HepG2 (cell line): ENCODE measurements at regions of chr2 and their contacts with region 1.

Region 1: GRCh38 chr2:177929662-177930522 is 142.7 kb downstream of the PDE11A start:
- DNase-seq: no peak
- ATAC-seq: no peak
- H3K4me3 ChIP-seq: no peak overlapping the region
- H3K27ac ChIP-seq: no peak overlapping the region
- H3K4me1 ChIP-seq: no peaks in the 10 kb centered on the region
- H3K27me3 ChIP-seq: no peaks in the 10 kb centered on the region
- CTCF ChIP-seq: no peak
- EP300 ChIP-seq: no peak
- POLR2A ChIP-seq: no peak
- RAD21 ChIP-seq: no peak

Region 2: GRCh38 chr2:176613323-176613987 is 1316.4 kb before region 1 on chr2:
- CTCF ChIA-PET with region 1: no interaction called
- POLR2A ChIA-PET with region 1: no interaction called
- in situ Hi-C with region 1: no loop called
- intact Hi-C with region 1: loop called (anchors 5 kb)
- DNase-seq: no peak
- ATAC-seq: no peak
- H3K4me3 ChIP-seq: no peak overlapping the region
- H3K27ac ChIP-seq: no peak overlapping the region
- H3K4me1 ChIP-seq: no peaks in the 10 kb centered on the region
- H3K27me3 ChIP-seq: no peaks in the 10 kb centered on the region
- CTCF ChIP-seq: no peak
- EP300 ChIP-seq: no peak
- POLR2A ChIP-seq: no peak
- RAD21 ChIP-seq: no peak